Posterior vena cava (tissue), 2 donors: ENCODE measurements at regions of chr17 and their contacts with region 1.

Region 1: DNA sequence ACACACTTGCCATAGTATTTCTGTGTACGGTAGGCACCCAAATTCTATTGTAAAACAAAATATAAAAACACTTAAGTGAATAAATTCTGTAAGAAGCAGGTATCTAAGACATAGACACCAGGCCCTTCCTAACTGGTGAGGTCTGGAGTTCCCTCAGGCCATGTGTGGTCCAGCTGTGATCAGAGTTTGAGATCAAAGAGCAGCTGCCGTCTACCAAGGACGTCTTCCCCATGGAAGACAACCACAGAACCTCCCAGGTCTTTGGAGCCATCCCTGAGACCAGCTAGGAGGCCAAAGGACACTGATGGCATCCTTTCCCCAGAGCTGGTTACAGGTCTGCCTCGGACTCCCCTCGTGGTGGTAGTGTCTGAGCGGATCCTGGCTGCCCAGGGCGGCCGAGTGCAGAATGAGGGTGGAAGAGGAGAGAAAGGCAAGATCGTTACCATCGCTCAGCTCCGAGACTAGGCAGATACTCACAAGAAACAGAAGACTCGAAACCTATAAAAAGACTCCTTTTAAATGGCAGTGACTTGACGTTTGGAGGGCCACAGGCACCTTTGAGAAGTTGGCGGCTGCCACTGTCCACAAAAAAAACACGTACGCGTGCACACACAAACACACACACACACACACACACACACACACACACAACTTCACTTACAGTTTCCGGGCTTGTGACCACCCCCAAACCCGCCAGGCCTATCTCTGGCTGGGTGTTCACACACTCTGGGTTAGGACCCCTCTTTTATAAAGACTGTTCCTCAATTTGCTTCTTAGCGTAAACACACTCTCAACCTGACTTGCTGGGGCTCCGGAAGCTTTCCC is 7.5 kb downstream of the TIMP2 start:
- DNase-seq: no peak

Region 2: DNA sequence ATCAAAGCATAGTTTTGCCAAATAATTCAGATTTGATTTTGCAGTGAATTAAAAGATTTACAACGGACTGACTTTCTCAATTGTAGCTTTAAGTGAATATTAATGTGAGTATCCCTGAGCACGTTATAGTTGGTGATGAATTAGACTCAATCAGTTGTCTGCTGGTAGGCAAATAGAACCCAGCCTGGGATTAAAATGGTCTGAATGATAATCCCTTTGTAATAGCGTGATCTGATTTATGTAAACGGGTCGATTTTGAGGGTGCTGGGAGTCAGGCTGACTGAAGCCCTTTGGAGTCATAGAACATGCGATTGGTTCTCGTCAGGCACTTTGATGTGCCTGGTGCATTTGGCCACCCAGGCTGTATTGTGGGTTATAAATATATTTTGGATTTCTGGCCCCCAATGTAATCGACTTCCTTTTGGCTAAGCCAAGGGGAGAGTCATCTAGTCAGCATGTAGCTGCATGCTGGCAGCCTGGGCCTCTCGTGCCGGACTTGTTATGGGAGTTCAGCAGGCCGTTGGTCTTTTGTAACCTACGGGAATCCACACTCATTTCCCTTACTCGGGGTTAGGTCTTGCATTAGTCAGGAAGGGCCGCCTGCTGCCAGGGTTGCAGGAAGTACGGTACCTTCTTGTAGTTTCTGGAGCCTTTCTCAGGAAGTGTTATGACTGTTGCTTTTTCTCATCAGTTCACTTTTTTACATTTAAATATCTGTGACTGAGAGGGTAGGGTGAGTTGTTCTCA is 533.8 kb before region 1 on chr17:
- intact Hi-C with region 1: no loop called
- DNase-seq: peak; percentile 98

Region 3: GRCh38 chr17:78903101-78903779 is 14.4 kb before region 1 on chr17 and contains the start of gene CEP295NL:
- intact Hi-C with region 1: loop called in 1 of 2 experiments (anchors 2 kb)
- DNase-seq: no peak
- total RNA-seq, gene CEP295NL: 4.1 to 4.9 TPM